Dorsolateral prefrontal cortex (tissue), 120 donors: ENCODE measurements at regions of chr1 and their contacts with region 1.

Region 1: GRCh38 chr1:23691499-23692307 is at the start of gene RPL11:
- DNase-seq: peak; percentile 90 to 98 (median 94)
- H3K4me3 ChIP-seq: peak within 1 kb of the TSS; percentile 62 to 98 (median 89)
- H3K27ac ChIP-seq: peak within 1 kb of the TSS; percentile 38 to 96 (median 85)
- H3K27me3 ChIP-seq: no peaks in the 10 kb centered on the region
- CTCF ChIP-seq: peak; percentile 70 to 96 (median 88)
- total RNA-seq, gene RPL11: 167 to 380 (median 287) TPM

Region 2: DNA sequence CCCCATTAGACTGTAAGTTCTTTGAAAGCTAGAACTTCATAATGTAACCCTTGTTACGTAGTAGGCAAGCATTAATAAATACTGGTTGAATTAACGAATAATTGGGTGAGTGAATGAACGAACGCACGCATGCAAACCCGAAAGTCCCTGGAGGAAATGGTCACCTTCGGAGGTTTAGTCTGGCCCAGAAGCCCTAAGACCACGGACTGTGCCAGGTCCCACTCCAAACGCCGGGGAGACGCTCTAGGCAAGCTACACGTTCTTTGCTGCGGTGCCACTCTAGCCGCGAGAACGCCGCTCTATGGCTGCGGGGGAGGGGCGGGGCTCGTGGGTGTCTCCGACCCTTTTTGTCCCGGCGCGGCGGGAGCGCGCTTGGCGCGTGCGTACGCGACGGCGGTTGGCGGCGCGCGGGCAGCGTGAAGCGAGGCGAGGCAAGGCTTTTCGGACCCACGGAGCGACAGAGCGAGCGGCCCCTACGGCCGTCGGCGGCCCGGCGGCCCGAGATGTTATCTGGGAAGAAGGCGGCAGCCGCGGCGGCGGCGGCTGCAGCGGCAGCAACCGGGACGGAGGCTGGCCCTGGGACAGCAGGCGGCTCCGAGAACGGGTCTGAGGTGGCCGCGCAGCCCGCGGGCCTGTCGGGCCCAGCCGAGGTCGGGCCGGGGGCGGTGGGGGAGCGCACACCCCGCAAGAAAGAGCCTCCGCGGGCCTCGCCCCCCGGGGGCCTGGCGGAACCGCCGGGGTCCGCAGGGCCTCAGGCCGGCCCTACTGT is 672.4 kb before region 1 on chr1 and contains the start of gene KDM1A:
- intact Hi-C with region 1: loop called in 1 of 2 experiments (anchors 2 kb)
- DNase-seq: peak; percentile 96 to 98 (median 98)
- H3K4me3 ChIP-seq: peak within 1 kb of the TSS; percentile 61 to 100 (median 94)
- H3K27ac ChIP-seq: peak within 1 kb of the TSS in 58 of 59 donors; percentile 2 to 93 (median 81)
- H3K27me3 ChIP-seq: no peaks in the 10 kb centered on the region
- CTCF ChIP-seq: peak in 55 of 56 donors; percentile 8 to 76 (median 48)
- total RNA-seq, gene KDM1A: 33.5 to 68.5 (median 56.1) TPM

Region 3: DNA sequence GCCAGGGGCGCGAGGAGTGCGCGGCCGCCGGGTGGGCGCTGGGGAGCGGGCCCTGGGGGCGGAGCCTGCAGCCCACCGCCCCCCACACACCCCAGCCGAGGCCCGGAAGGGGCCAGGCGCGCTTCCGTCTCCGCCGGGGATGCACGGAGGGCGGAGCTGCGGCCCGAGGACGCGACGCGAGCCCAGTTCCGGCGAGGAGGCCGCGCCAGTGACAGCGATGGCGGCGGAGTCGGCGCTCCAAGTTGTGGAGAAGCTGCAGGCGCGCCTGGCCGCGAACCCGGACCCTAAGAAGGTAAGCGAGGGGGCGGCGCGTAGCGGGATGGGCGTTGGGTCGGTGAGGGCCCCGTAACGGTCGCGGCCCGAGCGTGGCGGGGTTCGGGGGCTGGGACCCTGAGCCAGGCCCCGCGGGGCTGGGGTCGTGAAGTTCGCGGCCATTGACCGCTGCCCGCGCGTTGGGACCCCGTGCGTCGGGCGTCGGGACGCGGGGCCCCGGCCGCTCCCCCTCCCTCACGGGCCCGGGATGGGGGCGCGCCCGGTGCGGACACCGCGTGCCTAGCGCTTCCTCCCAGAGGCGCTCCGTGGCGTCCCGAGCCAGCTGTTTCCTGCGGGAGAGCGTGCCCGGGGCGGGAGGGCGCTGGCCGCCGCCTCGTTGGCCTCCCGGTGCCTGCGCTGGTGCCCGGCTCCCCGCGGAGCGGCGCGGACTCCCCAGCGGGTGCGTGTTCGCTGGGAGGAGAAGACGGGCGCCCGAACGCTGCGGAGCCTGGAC is 51.8 kb after region 1 on chr1 and contains the start of gene ELOA:
- intact Hi-C with region 1: loop called in 1 of 2 experiments (anchors 5 kb)
- DNase-seq: peak; percentile 50 to 84 (median 64)
- H3K4me3 ChIP-seq: peak within 1 kb of the TSS; percentile 55 to 99 (median 92)
- H3K27ac ChIP-seq: peak within 1 kb of the TSS in 58 of 59 donors; percentile 43 to 96 (median 86)
- H3K27me3 ChIP-seq: no peaks in the 10 kb centered on the region
- CTCF ChIP-seq: peak in 9 of 56 donors; percentile 7 to 43 (median 26)
- total RNA-seq, gene ELOA: 22.2 to 40.6 (median 28.2) TPM

Region 4: DNA sequence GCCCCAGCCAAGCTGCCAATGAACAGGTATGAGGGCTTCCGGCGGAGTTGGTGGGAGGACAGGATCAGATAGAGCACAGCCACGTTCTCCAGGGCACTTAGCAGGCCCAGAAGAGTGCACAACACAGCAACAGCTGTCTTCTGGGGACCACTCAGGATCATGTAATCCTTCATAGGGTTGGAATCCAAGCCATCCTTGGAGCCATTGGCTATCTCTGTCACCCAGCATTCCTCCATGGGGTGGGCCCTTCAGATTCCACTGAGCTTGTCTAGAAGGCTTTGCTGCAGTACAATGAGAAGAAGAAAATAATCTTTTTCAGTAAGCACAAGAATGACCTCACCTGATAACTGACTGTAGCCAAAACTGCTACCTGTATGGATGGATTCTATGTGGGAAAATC is 183.7 kb after region 1 on chr1:
- intact Hi-C with region 1: loop called in 1 of 2 experiments (anchors 10 kb)
- DNase-seq: no peak
- H3K4me3 ChIP-seq: no peak overlapping the region
- H3K27ac ChIP-seq: no peak overlapping the region
- H3K27me3 ChIP-seq: peaks cover 0 to 3% (median 0%) of the 10 kb centered on the region in 45 donors
- CTCF ChIP-seq: no peak

Region 5: GRCh38 chr1:23979878-23980724 is 288.4 kb after region 1 on chr1 and contains the start of gene SRSF10:
- intact Hi-C with region 1: no loop called
- DNase-seq: peak; percentile 95 to 98 (median 98)
- H3K4me3 ChIP-seq: peak within 1 kb of the TSS; percentile 66 to 98 (median 92)
- H3K27ac ChIP-seq: peak within 1 kb of the TSS; percentile 61 to 99 (median 95)
- H3K27me3 ChIP-seq: no peaks in the 10 kb centered on the region
- CTCF ChIP-seq: peak in 55 of 56 donors; percentile 40 to 88 (median 75)
- total RNA-seq, gene SRSF10: 59.4 to 96.0 (median 77.6) TPM